ENCODE measurements at regions of chr6 and their contacts with region 1.

Region 1: GRCh38 chr6:41602864-41603608 is 35.2 kb upstream of the MDFI start:
- DNase-seq: peak; percentile 89 to 92 (median 92)
- H3K4me3 ChIP-seq: peak overlapping the region in 5 of 7 experiments; percentile 2 to 54 (median 35)
- H3K27ac ChIP-seq: no peak overlapping the region
- H3K4me1 ChIP-seq: peaks cover 0 to 7% (median 5%) of the 10 kb centered on the region in 4 experiments
- H3K27me3 ChIP-seq: no peaks in the 10 kb centered on the region

Region 2: DNA sequence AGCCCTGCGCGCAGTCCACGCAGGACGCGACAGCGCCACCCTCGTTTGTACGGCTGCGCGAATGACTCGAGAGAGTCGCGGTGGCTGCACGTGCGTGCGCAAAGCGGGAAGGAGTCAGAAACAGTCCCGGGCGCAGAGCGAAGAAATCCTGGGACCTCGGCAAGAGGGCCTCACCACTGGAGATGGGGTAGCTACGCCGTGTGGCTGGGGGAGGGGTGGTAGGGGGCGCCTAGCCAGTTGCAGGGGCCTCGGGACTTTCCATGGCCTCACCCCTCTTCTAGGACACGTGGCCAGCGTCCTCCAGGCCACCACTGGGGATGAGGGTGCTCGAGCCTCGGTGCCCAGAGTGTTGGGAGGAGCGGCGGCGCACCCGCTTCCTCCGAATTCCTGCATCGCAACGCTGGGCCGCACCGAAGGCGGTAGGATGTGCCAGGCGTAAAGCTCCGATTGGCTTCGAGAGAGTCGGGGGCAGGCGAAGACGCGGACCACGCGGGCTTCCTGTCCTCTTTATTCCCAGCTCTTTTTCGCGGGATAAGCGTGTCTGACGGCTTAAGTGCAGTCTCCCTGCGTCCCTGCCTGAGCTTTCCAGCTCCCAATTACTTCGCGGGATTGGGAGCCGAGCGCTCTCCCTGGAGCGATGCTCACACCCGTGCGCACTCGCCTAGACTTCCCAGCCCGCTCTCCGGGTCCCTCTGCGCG is 229.0 kb before region 1 on chr6:
- CTCF ChIA-PET with region 1: interaction called, 12 read pairs
- POLR2A ChIA-PET with region 1: no interaction called
- DNase-seq: peak in 2 of 3 donors; percentile 49 to 51
- H3K4me3 ChIP-seq: peak overlapping the region in 2 of 7 experiments; percentile 16 to 19
- H3K27ac ChIP-seq: no peak overlapping the region
- H3K4me1 ChIP-seq: peaks cover 0 to 49% (median 34%) of the 10 kb centered on the region in 4 experiments
- H3K27me3 ChIP-seq: peaks cover 35 to 99% (median 54%) of the 10 kb centered on the region in 5 experiments

Region 3: DNA sequence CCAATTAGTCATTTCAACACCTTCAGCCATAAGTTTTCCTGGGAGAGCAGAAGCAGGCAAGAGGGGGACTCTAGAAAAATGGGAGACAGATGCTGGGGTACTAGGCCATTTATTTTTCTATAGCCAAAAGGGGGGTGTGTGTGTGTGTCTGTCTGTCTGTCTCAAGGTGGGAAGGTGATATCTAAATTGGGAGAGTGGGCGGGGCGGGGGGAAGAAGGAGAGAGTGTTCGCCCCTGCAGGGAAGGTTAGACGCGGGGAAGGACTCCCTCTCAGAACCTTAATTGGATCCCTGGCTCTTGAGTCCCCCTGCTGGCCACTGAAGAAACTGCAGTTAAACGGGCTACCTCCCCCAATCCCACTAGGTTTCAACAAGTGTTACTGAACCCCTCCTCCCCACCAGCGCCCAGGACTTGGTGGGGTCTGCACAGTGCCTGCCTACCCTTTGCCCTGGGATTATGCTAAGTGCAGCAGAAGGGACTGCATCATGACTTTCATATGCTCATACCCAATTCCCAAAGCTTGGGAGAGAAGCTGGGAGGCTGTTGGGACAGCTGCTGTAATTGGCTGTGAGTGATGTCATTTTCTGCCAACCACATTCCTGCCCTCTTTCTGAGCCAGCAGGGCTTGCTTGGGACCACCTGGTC is 11.1 kb before region 1 on chr6:
- CTCF ChIA-PET with region 1: interaction called, 10 read pairs
- POLR2A ChIA-PET with region 1: no interaction called
- DNase-seq: peak; percentile 65 to 80 (median 73)
- H3K4me3 ChIP-seq: no peak overlapping the region
- H3K27ac ChIP-seq: no peak overlapping the region
- H3K4me1 ChIP-seq: no peaks in the 10 kb centered on the region
- H3K27me3 ChIP-seq: no peaks in the 10 kb centered on the region

Region 4: GRCh38 chr6:41615254-41615653 is 12.2 kb after region 1 on chr6:
- CTCF ChIA-PET with region 1: interaction called, 19 read pairs
- POLR2A ChIA-PET with region 1: no interaction called
- DNase-seq: no peak
- H3K4me3 ChIP-seq: no peak overlapping the region
- H3K27ac ChIP-seq: no peak overlapping the region
- H3K4me1 ChIP-seq: no peaks in the 10 kb centered on the region
- H3K27me3 ChIP-seq: no peaks in the 10 kb centered on the region

Region 5: DNA sequence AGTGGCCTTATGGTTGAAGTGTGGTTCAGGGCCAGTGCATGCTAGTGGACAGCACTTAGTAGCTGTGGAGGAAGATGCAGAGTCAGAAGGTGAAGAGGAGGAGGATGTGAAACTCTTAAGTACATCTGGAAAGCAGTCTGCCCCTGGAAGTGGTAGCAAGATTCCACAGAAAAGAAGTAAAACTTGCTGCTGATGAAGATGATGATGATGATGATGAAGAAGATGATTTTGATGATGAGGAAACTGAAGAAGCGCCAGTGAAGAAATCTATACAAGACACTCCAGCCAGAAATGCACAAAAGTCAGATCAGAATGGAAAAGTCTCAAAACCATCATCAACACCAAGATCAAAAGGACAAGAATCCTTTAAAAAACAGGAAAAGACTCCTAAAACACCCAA is 64.2 kb after region 1 on chr6:
- CTCF ChIA-PET with region 1: no interaction called
- POLR2A ChIA-PET with region 1: no interaction called
- DNase-seq: no peak
- H3K4me3 ChIP-seq: no peak overlapping the region
- H3K27ac ChIP-seq: no peak overlapping the region
- H3K4me1 ChIP-seq: no peaks in the 10 kb centered on the region
- H3K27me3 ChIP-seq: peaks cover 0 to 4% (median 0%) of the 10 kb centered on the region in 5 experiments

Region 6: GRCh38 chr6:41683510-41684310 is 80.7 kb after region 1 on chr6:
- CTCF ChIA-PET with region 1: interaction called, 84 read pairs
- POLR2A ChIA-PET with region 1: interaction called, 4 read pairs
- DNase-seq: peak; percentile 78 to 84 (median 82)
- H3K4me3 ChIP-seq: peak overlapping the region in 5 of 7 experiments; percentile 34 to 76 (median 69)
- H3K27ac ChIP-seq: peak overlapping the region; percentile 5 to 15
- H3K4me1 ChIP-seq: peaks cover 0 to 19% (median 17%) of the 10 kb centered on the region in 4 experiments
- H3K27me3 ChIP-seq: no peaks in the 10 kb centered on the region